ENCODE measurements at regions of chr5 and their contacts with region 1.

Region 1: DNA sequence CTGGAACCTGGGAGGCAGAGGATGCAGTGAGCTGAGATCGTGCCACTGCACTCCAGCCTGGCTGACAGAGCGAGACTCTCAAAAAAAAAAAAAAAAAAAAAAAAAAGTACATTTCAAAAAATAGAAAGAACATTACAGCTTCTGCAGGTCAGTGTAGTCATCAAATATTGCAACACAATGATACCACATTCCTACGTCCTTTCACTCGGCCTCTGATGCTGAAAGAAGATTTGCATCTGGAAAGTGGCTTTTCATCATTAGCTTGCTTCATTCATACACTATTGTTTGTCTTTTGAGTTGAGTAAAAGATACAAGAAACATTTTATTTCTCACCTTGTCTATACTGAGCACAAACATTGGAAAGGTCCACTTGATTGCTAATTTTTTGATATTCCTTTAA is 59.6 kb upstream of the CPLANE1 start:
- DNase-seq: no peak
- ATAC-seq: no peak
- H3K4me3 ChIP-seq: no peak overlapping the region
- H3K27ac ChIP-seq: no peak overlapping the region
- H3K4me1 ChIP-seq: no peaks in the 10 kb centered on the region
- H3K27me3 ChIP-seq: no peaks in the 10 kb centered on the region
- CTCF ChIP-seq: no peak
- POLR2A ChIP-seq: no peak

Region 2: DNA sequence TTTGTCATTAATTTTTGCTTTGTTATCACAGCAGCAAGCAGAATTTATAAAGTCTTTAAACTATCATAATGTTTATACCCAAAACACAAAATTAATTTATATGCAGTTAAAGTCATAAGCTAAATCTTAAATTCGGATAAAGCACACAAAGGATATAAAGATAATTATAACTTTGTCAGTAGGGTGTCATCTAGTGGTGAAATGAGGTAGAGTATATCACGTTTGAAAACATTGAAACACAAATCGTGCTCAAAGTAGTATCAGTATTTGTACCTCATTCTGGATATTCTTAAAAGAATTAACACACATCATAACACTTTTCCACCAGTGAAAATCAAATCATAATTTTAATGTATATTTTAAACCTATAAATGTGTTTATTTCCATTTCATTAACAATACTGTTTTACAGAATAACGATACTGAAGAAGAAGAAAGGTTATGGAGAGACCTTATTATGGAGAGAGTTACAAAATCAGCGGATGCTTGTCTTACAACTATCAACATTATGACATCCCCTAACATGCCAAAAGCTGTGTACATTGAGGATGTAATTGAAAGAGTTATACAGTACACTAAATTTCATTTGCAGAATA is 302.8 kb before region 1 on chr5:
- in situ Hi-C with region 1: loop called in 1 of 4 experiments (anchors 25 kb)
- intact Hi-C with region 1: no loop called
- DNase-seq: no peak
- ATAC-seq: no peak
- H3K4me3 ChIP-seq: no peak overlapping the region
- H3K27ac ChIP-seq: no peak overlapping the region
- H3K4me1 ChIP-seq: no peaks in the 10 kb centered on the region
- H3K27me3 ChIP-seq: no peaks in the 10 kb centered on the region
- CTCF ChIP-seq: peak; percentile 13 to 59 (median 48)
- POLR2A ChIP-seq: no peak

Region 3: GRCh38 chr5:37043688-37044087 is 265.1 kb before region 1 on chr5:
- in situ Hi-C with region 1: loop called in 2 of 4 experiments (anchors 25 kb)
- intact Hi-C with region 1: no loop called
- DNase-seq: no peak
- ATAC-seq: no peak
- H3K4me3 ChIP-seq: no peak overlapping the region
- H3K27ac ChIP-seq: no peak overlapping the region
- H3K4me1 ChIP-seq: no peaks in the 10 kb centered on the region
- H3K27me3 ChIP-seq: no peaks in the 10 kb centered on the region
- CTCF ChIP-seq: no peak
- POLR2A ChIP-seq: no peak

Region 4: GRCh38 chr5:38968665-38969064 is 1659.9 kb after region 1 on chr5:
- in situ Hi-C with region 1: loop called in 2 of 4 experiments (anchors 25 kb)
- intact Hi-C with region 1: no loop called
- DNase-seq: no peak
- ATAC-seq: no peak
- H3K4me3 ChIP-seq: no peak overlapping the region
- H3K27ac ChIP-seq: no peak overlapping the region
- H3K4me1 ChIP-seq: no peaks in the 10 kb centered on the region
- H3K27me3 ChIP-seq: no peaks in the 10 kb centered on the region
- CTCF ChIP-seq: no peak
- POLR2A ChIP-seq: no peak

Measured in gastrocnemius medialis (tissue), 4 donors.